ENCODE measurements at regions of chr6 and their contacts with region 1.

Region 1: GRCh38 chr6:87907521-87907920 is 140.1 kb upstream of the SPACA1 start:
- DNase-seq: no peak
- ATAC-seq: no peak
- H3K4me3 ChIP-seq: no peak overlapping the region
- H3K4me3 Mint-ChIP-seq: no peak overlapping the region
- H3K27ac ChIP-seq: no peak overlapping the region
- H3K27ac Mint-ChIP-seq: no peak overlapping the region
- H3K4me1 ChIP-seq: peaks cover 4 to 7% of the 10 kb centered on the region in 2 donors
- H3K4me1 Mint-ChIP-seq: peaks cover 15% of the 10 kb centered on the region
- H3K27me3 ChIP-seq: no peaks in the 10 kb centered on the region
- H3K27me3 Mint-ChIP-seq: peaks cover 6% of the 10 kb centered on the region
- CTCF ChIP-seq: no peak

Region 2: GRCh38 chr6:87281426-87281825 is 626.1 kb before region 1 on chr6:
- CTCF ChIA-PET with region 1: no interaction called
- POLR2A ChIA-PET with region 1: no interaction called
- intact Hi-C with region 1: no loop called
- DNase-seq: no peak
- ATAC-seq: no peak
- H3K4me3 ChIP-seq: no peak overlapping the region
- H3K4me3 Mint-ChIP-seq: no peak overlapping the region
- H3K27ac ChIP-seq: no peak overlapping the region
- H3K27ac Mint-ChIP-seq: no peak overlapping the region
- H3K4me1 ChIP-seq: no peaks in the 10 kb centered on the region
- H3K4me1 Mint-ChIP-seq: peaks cover 3% of the 10 kb centered on the region
- H3K27me3 ChIP-seq: no peaks in the 10 kb centered on the region
- H3K27me3 Mint-ChIP-seq: peaks cover 13% of the 10 kb centered on the region
- CTCF ChIP-seq: no peak

Region 3: DNA sequence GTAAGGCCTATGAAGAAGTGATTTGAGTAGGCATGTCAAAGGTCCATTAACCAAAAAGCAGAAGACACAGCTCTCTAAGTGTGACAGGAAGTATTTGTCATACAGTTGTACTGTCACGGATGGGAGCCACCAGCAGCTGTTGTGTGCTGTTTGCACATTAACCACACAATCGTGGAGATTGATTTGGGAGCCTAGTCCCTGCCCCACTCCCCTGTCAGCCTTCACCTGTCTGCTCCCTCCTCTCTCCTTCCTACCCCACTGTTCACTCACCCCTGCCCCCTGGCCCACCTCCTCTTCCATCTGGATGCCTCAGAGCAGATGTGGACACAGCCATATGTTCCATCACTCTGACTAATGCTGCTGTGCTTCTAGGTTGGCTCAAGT is 15.4 kb after region 1 on chr6:
- CTCF ChIA-PET with region 1: interaction called, 12 read pairs
- POLR2A ChIA-PET with region 1: no interaction called
- intact Hi-C with region 1: no loop called
- DNase-seq: peak; percentile 86
- ATAC-seq: peak; percentile 77
- H3K4me3 ChIP-seq: no peak overlapping the region
- H3K4me3 Mint-ChIP-seq: peak overlapping the region; percentile 63
- H3K27ac ChIP-seq: peak overlapping the region; percentile 63 to 91
- H3K27ac Mint-ChIP-seq: peak overlapping the region; percentile 92
- H3K4me1 ChIP-seq: peaks cover 90% of the 10 kb centered on the region in 2 donors
- H3K4me1 Mint-ChIP-seq: peaks cover 91% of the 10 kb centered on the region
- H3K27me3 ChIP-seq: no peaks in the 10 kb centered on the region
- H3K27me3 Mint-ChIP-seq: no peaks in the 10 kb centered on the region
- CTCF ChIP-seq: no peak